BJ (cell line): ENCODE measurements at regions of chr1 and their contacts with region 1.

Region 1: DNA sequence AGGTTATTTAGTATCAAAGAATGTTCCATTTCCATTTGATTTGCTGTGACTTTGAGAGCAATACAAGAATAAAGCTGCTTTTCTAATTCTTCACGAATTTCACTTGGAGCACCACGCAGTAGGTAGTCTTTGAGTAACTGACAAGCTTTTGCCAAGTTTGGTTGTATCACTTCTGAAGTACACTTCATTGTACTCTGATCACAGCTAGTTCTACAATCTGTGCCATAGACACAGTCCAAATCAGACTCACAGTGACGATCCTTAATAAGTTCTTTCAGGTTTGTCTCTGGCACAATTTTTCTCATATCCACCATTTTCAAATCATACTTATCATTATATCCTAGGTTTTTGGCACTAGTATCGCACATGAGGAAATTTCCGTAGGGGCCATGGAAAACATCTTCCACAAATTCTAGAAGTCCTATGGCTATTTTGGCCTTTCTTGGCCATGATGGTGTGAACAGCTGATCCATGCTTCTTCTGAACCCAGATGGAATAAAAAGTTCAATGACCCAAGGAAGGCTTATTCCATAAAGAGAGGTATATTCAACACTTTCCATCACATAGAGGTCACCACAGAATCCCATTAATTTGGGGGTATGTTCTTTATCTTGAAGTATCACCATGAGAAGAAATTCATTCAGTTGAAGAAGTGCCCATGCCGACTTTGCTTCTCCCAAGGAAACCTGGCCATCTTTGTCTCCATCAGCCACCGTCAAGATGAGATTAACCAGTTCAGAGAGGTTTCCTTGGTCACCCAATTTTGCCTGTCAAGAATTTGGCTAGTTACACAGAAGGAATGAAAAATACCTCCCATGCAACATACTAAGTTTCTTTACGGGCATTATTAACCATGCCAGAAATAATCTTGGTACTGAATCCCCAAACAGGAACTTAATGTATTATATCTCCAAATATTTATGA is 11.9 kb downstream of the RPL5 start:
- DNase-seq: no peak
- H3K4me3 ChIP-seq: no peak overlapping the region
- H3K27me3 ChIP-seq: no peaks in the 10 kb centered on the region
- CTCF ChIP-seq: no peak

Region 2: GRCh38 chr1:92792340-92792782 is 51.3 kb before region 1 on chr1:
- CTCF ChIA-PET with region 1: no interaction called
- POLR2A ChIA-PET with region 1: no interaction called
- DNase-seq: no peak
- H3K4me3 ChIP-seq: no peak overlapping the region
- H3K27me3 ChIP-seq: no peaks in the 10 kb centered on the region; the same call in 1 of the 2 replicates
- CTCF ChIP-seq: no peak

Region 3: GRCh38 chr1:92831762-92832536 is 11.7 kb before region 1 on chr1 and contains the start of gene RPL5:
- CTCF ChIA-PET with region 1: interaction called, 16 read pairs
- POLR2A ChIA-PET with region 1: no interaction called
- DNase-seq: peak; percentile 82
- H3K4me3 ChIP-seq: peak within 1 kb of the TSS; percentile 62
- H3K27me3 ChIP-seq: no peaks in the 10 kb centered on the region
- CTCF ChIP-seq: peak; percentile 97
- polyA plus RNA-seq, gene RPL5: 1,389 and 2,073 TPM in 2 replicates

Region 4: DNA sequence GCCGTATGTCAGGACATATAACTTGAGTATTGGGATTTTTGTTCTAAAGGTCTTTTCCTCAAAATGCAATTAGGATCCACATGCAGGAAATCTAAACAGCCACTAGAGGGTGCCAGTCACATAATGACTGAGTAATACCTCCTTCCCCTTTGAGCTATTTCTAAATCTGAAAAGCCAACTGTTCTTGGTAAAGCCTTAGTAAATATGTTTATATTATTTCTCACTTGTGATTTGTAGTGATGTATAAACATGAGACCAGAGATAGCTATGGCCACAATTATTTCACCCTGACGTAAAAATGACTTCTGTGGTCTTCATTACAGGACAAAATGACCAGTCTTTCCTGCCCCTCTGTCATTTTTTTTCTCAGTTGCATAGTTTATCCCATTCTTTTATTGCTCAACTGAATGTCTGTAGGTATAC is 461.0 kb after region 1 on chr1:
- CTCF ChIA-PET with region 1: no interaction called
- POLR2A ChIA-PET with region 1: no interaction called
- DNase-seq: peak; percentile 19
- H3K4me3 ChIP-seq: no peak overlapping the region
- H3K27me3 ChIP-seq: no peaks in the 10 kb centered on the region
- CTCF ChIP-seq: peak; percentile 85